CD4-positive, alpha-beta T cell (primary cell): ENCODE measurements at regions of chr3 and their contacts with region 1.

Region 1: DNA sequence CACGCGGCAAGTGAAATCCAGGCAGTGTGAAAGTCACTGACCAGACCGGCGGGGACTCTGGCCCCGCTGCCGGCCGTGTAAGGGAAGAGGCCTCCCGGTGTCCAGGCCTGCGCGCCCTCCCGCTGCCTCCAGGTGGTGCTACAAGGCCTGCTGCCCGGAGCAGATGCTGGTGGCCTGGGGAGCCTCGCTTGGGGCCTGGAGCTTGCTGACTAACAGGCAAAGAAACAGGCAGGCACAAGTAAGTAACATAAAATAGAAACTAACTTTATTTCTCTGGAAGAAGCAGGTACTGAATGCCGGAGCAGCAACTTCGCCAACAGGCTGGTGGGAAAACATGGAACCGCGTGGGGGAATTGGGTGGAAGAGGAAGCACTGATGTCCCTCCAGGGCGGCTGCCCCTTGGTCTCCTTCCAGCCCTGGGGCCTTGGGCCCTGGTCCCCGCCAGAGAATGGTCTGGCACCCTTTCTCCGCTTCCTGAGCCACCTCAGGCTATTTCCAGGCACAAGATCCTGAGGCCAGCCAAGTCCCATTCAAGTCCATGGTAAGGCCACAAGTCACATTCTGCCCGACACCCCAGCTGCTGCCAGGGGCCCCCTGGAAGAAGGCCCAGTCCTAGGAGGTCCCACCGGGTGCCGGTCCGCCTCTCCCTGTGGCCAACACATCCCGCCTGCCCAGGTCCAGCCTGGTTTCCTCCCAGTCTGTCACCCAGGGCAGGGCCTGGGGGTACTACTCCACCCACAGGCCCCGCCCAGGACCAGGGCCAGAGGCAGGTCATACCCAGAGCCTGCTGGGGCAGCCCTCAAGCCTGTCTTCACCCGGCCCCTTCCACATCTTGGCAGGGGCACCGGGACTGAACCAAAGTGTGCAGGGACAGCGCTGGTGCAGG is 45.0 kb downstream of the TNK2 start:
- DNase-seq: peak; percentile 42 to 76 (median 57)
- ATAC-seq: peak; percentile 78
- H3K4me3 ChIP-seq: no peak overlapping the region
- H3K4me3 Mint-ChIP-seq: no peak overlapping the region
- H3K27ac ChIP-seq: no peak overlapping the region
- H3K27ac Mint-ChIP-seq: no peak overlapping the region
- H3K4me1 ChIP-seq: peaks cover 11% of the 10 kb centered on the region
- H3K4me1 Mint-ChIP-seq: peaks cover 5% of the 10 kb centered on the region
- H3K27me3 ChIP-seq: no peaks in the 10 kb centered on the region
- H3K27me3 Mint-ChIP-seq: no peaks in the 10 kb centered on the region
- CTCF ChIP-seq: peak; percentile 73

Region 2: DNA sequence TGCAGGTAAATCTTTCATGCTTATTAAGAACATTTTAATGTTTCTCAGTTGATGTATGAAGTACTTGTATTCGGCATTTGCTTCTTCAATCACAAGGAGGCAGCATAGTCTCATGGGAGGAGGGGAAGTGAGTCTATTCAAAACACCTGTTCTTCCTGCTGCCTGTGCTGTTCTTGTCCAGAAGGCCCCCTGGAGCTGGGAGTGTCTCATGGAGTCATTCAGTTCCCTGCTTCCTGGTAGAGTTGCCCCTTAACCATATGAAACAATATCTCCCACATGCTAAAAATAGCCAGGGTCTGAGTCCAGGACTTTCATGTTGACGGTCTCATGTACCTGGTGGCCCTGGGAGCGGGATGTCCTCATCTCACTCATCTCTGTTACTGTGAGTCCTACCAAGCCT is 304.8 kb before region 1 on chr3:
- CTCF ChIA-PET with region 1: no interaction called
- POLR2A ChIA-PET with region 1: no interaction called
- intact Hi-C with region 1: loop called in 1 of 2 experiments (anchors 2 kb)
- DNase-seq: peak in 6 of 14 experiments; percentile 32 to 80 (median 64)
- ATAC-seq: peak; percentile 78
- H3K4me3 ChIP-seq: no peak overlapping the region
- H3K4me3 Mint-ChIP-seq: peak overlapping the region; percentile 50
- H3K27ac ChIP-seq: no peak overlapping the region
- H3K27ac Mint-ChIP-seq: peak overlapping the region; percentile 72
- H3K4me1 ChIP-seq: peaks cover 28% of the 10 kb centered on the region
- H3K4me1 Mint-ChIP-seq: peaks cover 42% of the 10 kb centered on the region
- H3K27me3 ChIP-seq: no peaks in the 10 kb centered on the region
- H3K27me3 Mint-ChIP-seq: no peaks in the 10 kb centered on the region
- CTCF ChIP-seq: peak; percentile 77

Region 3: GRCh38 chr3:195894780-195895607 is 31.6 kb after region 1 on chr3:
- CTCF ChIA-PET with region 1: interaction called, 28 read pairs
- POLR2A ChIA-PET with region 1: no interaction called
- intact Hi-C with region 1: loop called (anchors 1 kb)
- DNase-seq: peak; percentile 51 to 87 (median 58)
- ATAC-seq: peak; percentile 66
- H3K4me3 ChIP-seq: peak overlapping the region; percentile 80
- H3K4me3 Mint-ChIP-seq: peak overlapping the region; percentile 95
- H3K27ac ChIP-seq: peak overlapping the region; percentile 71 to 88
- H3K27ac Mint-ChIP-seq: peak overlapping the region; percentile 92
- H3K4me1 ChIP-seq: peaks cover 67% of the 10 kb centered on the region
- H3K4me1 Mint-ChIP-seq: peaks cover 46% of the 10 kb centered on the region
- H3K27me3 ChIP-seq: no peaks in the 10 kb centered on the region
- H3K27me3 Mint-ChIP-seq: no peaks in the 10 kb centered on the region
- CTCF ChIP-seq: peak; percentile 90

Region 4: DNA sequence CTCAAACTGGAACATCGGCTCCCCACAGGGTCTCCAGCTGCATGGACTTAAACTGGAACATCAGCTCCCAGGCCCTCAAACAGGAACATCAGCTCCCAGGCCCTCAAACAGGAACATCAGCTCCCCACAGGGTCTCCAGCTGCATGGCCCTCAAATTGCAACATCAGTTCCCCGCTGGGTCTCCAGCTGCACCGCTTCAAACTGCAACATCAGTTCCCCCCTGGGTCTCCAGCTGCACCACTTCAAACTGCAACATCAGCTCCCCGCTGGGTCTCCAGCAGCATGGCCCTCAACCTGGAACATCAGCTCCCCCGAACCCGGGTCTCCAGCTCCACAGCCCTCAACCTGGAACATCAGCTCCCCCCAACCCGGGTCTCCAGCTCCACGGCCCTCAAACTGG is 136.5 kb after region 1 on chr3:
- CTCF ChIA-PET with region 1: no interaction called
- POLR2A ChIA-PET with region 1: no interaction called
- intact Hi-C with region 1: loop called in 1 of 2 experiments (anchors 5 kb)
- DNase-seq: no peak
- ATAC-seq: no peak
- H3K4me3 ChIP-seq: no peak overlapping the region
- H3K4me3 Mint-ChIP-seq: no peak overlapping the region
- H3K27ac ChIP-seq: no peak overlapping the region
- H3K27ac Mint-ChIP-seq: no peak overlapping the region
- H3K4me1 ChIP-seq: no peaks in the 10 kb centered on the region
- H3K4me1 Mint-ChIP-seq: no peaks in the 10 kb centered on the region
- H3K27me3 ChIP-seq: peaks cover 0 to 3% of the 10 kb centered on the region in 2 experiments
- H3K27me3 Mint-ChIP-seq: peaks cover 24% of the 10 kb centered on the region
- CTCF ChIP-seq: no peak